Vagina (tissue), 2 donors: ENCODE measurements at regions of chr15 and their contacts with region 1.

Region 1: DNA sequence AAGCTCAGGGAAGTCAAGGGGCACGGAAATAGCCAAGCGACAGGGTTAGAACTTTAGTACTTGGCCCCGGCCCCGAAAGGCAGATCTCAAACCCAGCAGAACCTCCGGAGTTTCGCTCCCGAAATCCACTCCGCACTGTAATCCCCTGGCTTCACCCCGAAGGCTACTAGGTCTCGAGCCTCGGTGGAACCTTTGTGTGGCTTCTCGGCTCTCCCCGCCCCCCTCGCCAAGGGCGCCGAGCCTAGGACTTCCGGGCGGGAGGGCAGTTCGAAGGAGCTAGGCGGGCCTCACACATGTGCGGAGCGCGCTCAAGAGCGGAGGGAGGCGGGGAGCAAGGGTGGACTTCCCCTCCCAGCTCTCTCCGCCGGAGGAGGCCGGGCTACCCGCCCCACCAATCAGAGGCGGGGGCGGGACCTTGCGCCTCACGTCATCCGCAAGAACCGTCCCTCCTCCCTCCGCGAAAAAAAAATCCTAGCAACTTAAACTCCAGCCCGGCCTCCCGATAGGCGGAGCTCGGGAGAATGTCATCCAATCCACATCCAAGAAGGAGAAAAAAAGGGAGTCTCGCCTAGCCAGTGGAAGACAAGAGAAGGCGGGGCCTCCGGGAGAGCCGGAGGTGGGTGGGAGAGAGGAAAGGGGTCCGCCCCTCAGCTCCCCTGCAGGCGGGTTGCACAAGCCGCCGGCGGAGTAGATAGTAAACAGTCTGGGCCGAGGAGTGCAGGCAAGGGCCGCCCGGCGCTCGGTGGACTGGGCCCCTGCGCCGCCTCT is 2.4 kb upstream of the SIN3A start:
- DNase-seq: peak; percentile 99 to 100
- H3K4me3 ChIP-seq: peak overlapping the region; percentile 74 to 99
- H3K27ac ChIP-seq: peak overlapping the region; percentile 99
- H3K4me1 ChIP-seq: peaks cover 27% of the 10 kb centered on the region
- H3K27me3 ChIP-seq: no peaks in the 10 kb centered on the region
- CTCF ChIP-seq: no peak
- POLR2A ChIP-seq: peak in 1 of 2 donors; percentile 82

Region 2: GRCh38 chr15:75367913-75368688 is 85.8 kb before region 1 on chr15 and contains the start of gene MAN2C1:
- intact Hi-C with region 1: loop called (anchors 2 kb)
- DNase-seq: peak in 1 of 2 donors; percentile 95
- H3K4me3 ChIP-seq: peak within 1 kb of the TSS; percentile 68 to 81
- H3K27ac ChIP-seq: peak within 1 kb of the TSS; percentile 91
- H3K4me1 ChIP-seq: peaks cover 20% of the 10 kb centered on the region
- H3K27me3 ChIP-seq: no peaks in the 10 kb centered on the region
- CTCF ChIP-seq: peak in 1 of 3 experiments; percentile 60
- POLR2A ChIP-seq: peak in 1 of 2 donors; percentile 68
- total RNA-seq, gene MAN2C1: 198 TPM

Region 3: DNA sequence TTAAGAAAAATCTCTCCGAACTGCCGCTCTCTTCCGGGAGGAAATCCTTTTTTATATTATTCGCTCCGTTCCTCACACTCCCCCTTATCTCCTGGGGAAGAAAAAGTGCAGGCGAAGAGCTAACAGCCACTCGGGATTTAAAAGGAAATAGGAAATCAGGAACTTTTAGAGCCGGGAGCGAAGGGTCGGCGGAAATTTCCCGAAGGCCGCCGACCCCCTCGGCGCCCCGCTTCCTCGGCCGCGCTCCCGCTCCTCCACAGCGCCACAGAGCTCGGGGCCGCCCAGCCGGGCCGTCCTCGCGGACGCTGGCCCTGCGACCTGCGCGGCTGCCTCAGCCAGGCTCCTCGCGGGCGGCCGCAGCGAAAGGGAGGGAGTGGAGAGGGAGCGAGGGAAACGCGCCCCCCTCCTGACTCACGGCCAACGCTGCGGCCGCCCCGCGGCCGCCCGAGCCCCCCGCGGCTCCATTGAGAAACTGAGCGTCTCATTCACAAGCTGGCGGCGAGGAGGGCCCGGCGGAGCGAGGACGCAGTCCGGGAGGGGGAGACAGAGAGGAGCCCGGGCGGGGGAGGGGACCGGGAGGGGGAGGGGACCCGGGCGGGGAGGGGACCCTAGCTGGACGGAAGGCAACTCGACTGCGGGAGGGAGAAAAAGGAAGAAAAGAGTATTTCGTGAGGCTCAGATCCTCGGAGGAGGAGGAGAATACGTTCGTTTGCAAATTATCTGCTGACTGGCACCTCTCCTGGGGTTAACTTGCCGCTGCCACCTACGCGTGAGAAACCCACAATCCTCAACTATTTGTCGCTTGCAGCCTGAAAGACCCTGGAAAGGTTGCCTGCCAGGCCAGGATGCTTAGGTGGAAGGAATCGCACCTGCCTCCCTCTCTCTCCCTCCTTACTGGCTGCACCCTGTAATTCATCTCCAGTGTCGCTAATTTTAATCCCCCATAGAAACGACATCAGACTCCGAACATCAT is 125.3 kb after region 1 on chr15 and contains the start of gene PTPN9:
- intact Hi-C with region 1: loop called (anchors 10 kb)
- DNase-seq: no peak
- H3K4me3 ChIP-seq: peak within 1 kb of the TSS; percentile 92 to 96
- H3K27ac ChIP-seq: peak within 1 kb of the TSS; percentile 94
- H3K4me1 ChIP-seq: peaks cover 18% of the 10 kb centered on the region
- H3K27me3 ChIP-seq: no peaks in the 10 kb centered on the region
- CTCF ChIP-seq: no peak
- POLR2A ChIP-seq: peak in 1 of 2 donors; percentile 27
- total RNA-seq, gene PTPN9: 18.2 TPM

Region 4: DNA sequence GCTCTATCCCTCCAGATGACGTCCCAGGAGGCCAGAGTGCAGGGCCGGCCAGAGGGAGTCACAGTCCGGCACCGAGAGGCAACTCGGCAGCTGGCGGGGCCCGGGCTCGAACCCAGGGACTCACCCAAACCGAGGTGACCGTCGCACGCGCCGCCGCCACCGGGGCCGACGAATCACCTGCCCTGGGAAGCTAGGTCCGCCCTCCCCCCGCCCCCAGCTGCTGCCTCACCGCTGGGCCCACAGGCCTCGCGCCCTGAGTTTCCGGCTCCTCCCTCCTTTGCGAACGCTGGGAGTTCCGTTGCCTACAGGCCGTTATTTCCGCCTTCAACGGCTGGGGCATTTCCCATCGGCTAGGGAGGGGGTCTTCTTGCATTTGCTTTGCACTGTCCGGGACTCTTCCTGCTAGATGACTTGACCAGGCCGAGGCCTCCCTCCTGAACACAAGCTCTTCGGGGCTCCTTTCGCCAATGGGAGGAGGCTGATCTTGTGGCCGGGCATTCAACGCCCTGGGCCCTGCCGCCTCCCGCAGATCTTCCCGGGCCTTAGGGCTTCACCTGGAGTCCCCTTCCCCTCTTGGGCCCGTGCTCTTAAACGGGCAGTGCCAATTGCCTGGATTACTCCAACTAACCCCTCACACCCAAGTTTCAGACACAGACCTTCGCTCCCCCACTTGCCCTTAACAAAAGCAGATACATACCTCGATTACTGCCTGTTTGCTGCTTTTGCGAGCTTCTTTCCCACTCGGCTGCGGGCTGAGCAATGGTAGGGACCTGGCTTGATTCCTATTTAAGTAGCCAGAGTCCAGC is 171.9 kb after region 1 on chr15 and contains the start of gene SNUPN:
- intact Hi-C with region 1: loop called (anchors 5 kb)
- DNase-seq: no peak
- H3K4me3 ChIP-seq: peak within 1 kb of the TSS; percentile 55 to 71
- H3K27ac ChIP-seq: peak within 1 kb of the TSS; percentile 96
- H3K4me1 ChIP-seq: peaks cover 27% of the 10 kb centered on the region
- H3K27me3 ChIP-seq: no peaks in the 10 kb centered on the region
- CTCF ChIP-seq: no peak
- POLR2A ChIP-seq: no peak
- total RNA-seq, gene SNUPN: 21.9 TPM

Region 5: DNA sequence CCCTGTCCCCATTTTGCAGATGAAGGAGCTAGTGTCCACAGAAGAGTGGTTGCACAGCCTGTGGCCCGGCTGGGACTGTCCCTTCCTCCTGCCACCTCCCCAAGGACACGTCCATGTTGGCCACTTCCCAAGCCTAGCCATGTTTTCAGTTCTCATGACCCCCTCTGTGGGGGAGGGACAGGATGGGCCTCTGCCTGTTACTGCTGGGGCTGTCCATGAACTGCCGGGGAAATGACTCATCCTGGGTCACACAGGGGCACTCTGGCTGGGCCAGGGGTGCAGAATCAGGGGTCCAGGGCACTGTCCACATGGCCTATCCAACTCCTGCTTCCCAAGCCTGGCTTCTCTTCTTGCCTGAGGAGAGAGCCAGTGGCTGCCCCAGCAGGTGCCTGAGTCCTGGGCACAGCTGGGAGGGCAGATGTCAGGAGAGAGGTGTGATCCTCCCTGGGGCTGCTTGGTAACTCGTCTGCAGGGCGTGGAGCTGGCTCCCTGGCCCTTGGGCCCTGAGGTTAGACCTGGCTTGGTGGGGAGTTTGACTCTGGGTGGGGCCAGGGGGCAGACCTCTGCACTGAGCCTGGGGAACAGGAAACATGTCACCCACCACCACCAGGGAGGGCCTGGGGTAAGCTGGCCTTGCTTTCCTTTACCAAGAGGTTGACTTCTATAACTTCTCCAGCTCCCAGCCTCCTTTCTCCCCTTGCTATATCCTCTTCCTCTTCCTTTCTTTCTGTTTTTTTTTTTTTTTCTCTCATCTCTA is 197.6 kb after region 1 on chr15:
- intact Hi-C with region 1: loop called (anchors 10 kb)
- DNase-seq: no peak
- H3K4me3 ChIP-seq: peak overlapping the region; percentile 67 to 70
- H3K27ac ChIP-seq: peak overlapping the region; percentile 93
- H3K4me1 ChIP-seq: peaks cover 87% of the 10 kb centered on the region
- H3K27me3 ChIP-seq: no peaks in the 10 kb centered on the region
- CTCF ChIP-seq: no peak
- POLR2A ChIP-seq: no peak